Breast epithelium (tissue), 4 donors: ENCODE measurements at regions of chr11 and their contacts with region 1.

Region 1: GRCh38 chr11:9250139-9250582 is 15.0 kb downstream of the DENND5A start:
- DNase-seq: no peak
- H3K4me3 ChIP-seq: no peak overlapping the region
- H3K27ac ChIP-seq: no peak overlapping the region
- H3K4me1 ChIP-seq: no peaks in the 10 kb centered on the region
- H3K27me3 ChIP-seq: no peaks in the 10 kb centered on the region
- CTCF ChIP-seq: no peak
- POLR2A ChIP-seq: no peak

Region 2: DNA sequence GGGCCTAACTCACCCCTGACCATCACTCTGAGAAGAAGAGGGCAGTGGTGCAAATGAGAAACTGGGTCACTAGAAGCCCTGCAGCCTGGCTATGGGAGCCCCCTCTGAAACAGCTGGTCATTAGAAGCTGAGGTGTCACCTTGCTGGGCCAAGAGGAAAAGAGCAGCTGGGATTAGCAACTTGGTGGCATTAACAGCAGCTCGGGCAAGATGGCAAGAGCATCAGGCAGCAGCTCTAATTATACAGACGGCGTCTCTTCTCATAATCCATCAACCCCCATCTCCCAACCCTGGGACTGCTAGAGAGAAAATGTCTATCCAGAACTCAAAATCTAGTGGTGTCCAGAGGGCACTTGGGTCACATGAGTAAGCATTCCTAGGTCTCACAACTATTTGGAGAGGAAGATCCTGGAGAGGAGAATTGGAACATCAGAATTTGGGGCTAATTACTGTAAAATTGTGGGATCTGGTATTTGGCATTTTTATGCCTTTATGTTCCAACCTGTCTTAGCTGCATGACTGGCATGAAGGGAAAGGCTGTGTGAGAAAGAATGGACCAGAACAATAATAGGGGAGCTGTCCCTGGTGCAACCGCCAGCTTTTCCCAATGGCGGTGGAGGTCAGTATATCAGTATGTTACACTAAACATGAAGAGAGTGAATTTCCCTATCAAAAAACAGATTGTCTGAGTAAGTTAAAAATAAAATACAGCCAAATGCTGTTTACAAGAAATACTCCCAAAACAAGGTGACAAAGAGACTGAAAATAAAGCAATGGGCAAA is 978.9 kb before region 1 on chr11:
- intact Hi-C with region 1: loop called (anchors 5 kb)
- DNase-seq: peak in 1 of 2 donors; percentile 2
- H3K4me3 ChIP-seq: no peak overlapping the region
- H3K27ac ChIP-seq: no peak overlapping the region
- H3K4me1 ChIP-seq: no peaks in the 10 kb centered on the region
- H3K27me3 ChIP-seq: peaks cover 0 to 40% of the 10 kb centered on the region in 2 donors
- CTCF ChIP-seq: no peak
- POLR2A ChIP-seq: no peak

Region 3: GRCh38 chr11:9838961-9839360 is 588.8 kb after region 1 on chr11:
- intact Hi-C with region 1: no loop called
- DNase-seq: no peak
- H3K4me3 ChIP-seq: no peak overlapping the region
- H3K27ac ChIP-seq: no peak overlapping the region
- H3K4me1 ChIP-seq: no peaks in the 10 kb centered on the region
- H3K27me3 ChIP-seq: no peaks in the 10 kb centered on the region
- CTCF ChIP-seq: no peak
- POLR2A ChIP-seq: no peak